Naive thymus-derived CD8-positive, alpha-beta T cell (primary cell): ENCODE measurements at regions of chr1 and their contacts with region 1.

Region 1: GRCh38 chr1:227762233-227762911 is 27.1 kb downstream of the SNAP47 start:
- DNase-seq: peak; percentile 79 to 94 (median 85)
- ATAC-seq: peak; percentile 61 to 63
- H3K4me3 Mint-ChIP-seq: peak overlapping the region in 9 of 10 donors; percentile 56 to 84 (median 71)
- H3K27ac Mint-ChIP-seq: peak overlapping the region; percentile 63 to 95 (median 88)
- H3K4me1 Mint-ChIP-seq: peaks cover 30 to 69% (median 68%) of the 10 kb centered on the region in 4 donors
- H3K27me3 Mint-ChIP-seq: no peaks in the 10 kb centered on the region

Region 2: GRCh38 chr1:227632325-227632724 is 130.0 kb before region 1 on chr1:
- POLR2A ChIA-PET with region 1: no interaction called
- DNase-seq: no peak
- ATAC-seq: no peak
- H3K4me3 Mint-ChIP-seq: peak overlapping the region in 1 of 10 donors; percentile 16
- H3K27ac Mint-ChIP-seq: no peak overlapping the region
- H3K4me1 Mint-ChIP-seq: no peaks in the 10 kb centered on the region
- H3K27me3 Mint-ChIP-seq: no peaks in the 10 kb centered on the region

Region 3: DNA sequence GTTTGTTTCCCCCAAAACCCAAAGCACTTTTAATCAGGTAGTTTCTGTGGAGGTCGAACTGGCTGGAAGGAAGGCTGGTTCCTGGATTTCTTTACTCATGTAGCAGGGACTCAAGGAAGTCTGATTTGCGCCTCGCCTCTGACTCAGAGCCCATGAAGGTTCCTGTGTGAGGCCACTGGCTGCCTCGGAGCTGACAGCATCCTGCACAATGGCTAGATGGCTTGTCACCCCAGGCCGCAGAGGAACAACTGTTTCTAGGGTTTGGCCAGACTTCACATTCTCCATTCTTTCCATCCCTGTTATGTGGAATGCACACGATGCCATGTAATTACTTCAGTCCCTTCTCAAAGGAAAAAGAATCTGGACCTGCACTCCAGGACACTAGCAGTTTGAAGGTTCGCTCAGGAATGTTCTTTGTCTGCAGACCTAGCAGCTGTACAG is 14.0 kb after region 1 on chr1:
- POLR2A ChIA-PET with region 1: interaction called, 20 read pairs
- DNase-seq: no peak
- ATAC-seq: no peak
- H3K4me3 Mint-ChIP-seq: peak overlapping the region in 1 of 10 donors; percentile 22
- H3K27ac Mint-ChIP-seq: peak overlapping the region in 5 of 10 donors; percentile 46 to 66 (median 52)
- H3K4me1 Mint-ChIP-seq: peaks cover 18 to 39% (median 33%) of the 10 kb centered on the region in 4 donors
- H3K27me3 Mint-ChIP-seq: no peaks in the 10 kb centered on the region

Region 4: DNA sequence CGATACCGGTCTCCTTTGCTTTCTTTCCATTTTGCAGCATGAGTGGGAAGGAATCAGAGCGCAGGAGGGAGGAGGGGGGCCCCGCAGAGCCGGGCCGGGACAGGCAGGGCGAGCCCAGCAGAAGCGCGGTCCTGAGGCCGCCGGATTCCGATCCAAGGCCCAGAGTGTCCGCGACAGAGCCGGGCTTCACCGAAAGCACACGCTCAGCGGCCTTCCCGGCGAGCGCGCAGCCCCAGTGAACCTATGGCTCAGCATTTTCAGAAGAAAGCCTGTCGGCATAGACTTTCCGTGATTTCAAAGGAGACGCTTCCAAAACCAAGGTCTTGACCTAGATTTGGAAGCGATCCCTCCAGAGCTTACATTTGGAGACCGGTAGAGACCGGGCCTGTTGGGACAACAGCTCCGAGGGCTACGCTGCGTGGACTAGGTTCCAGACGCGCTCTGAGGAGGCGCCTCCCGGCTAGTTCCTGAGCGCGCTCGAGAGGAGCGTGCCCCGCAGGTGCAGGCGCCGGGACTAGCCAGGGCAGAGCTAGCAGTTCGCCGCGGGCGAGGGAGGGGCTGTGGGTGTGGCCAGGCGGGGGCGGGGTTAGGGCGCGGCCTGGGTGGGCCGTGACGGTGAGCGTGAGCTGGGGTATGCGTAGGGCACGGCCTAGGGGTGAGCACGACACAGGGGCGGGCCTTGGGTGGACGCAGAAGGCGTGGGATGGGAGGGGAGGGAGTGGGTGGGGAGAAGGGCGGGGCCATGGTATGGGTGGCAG is 25.3 kb after region 1 on chr1:
- POLR2A ChIA-PET with region 1: interaction called, 38 read pairs
- DNase-seq: peak; percentile 86 to 98 (median 93)
- ATAC-seq: peak; percentile 84 to 93
- H3K4me3 Mint-ChIP-seq: peak overlapping the region; percentile 81 to 94 (median 86)
- H3K27ac Mint-ChIP-seq: peak overlapping the region in 8 of 10 donors; percentile 60 to 93 (median 82)
- H3K4me1 Mint-ChIP-seq: peaks cover 16 to 31% (median 28%) of the 10 kb centered on the region in 4 donors
- H3K27me3 Mint-ChIP-seq: no peaks in the 10 kb centered on the region

Region 5: DNA sequence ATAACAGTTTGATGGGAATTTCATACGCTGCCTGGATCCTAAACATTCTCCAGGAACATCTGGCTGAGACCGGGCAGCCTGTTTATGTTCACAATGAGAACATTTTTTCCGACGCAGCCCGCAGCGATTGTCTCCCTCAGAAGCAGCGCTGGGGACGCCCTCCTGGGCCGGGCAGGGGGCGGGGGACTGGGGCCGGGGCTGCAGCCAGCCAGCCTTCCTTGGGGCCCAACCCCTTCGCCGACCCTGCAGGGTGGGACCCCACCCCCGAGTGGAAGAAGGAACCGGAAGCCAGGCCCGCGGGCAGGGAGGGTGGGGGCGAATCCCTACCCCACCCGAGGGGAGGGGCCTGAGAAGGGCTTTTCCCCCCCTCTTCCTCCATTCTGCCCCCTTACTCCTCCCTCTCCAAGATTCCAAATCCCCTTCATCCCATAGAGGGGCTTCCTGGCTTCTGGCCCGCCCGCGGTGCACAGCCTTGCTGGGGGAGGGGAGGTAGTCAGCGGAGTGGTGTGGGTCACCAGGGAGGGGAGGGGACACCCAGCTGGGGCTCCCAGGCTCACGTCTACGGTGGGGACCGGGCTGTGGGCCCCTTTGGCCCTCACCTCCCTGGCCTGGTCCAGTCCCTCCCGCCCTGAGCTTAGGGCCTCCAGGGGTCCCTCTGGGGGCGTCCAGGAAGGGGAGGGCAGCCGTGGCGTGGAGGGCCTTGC is 124.8 kb after region 1 on chr1:
- POLR2A ChIA-PET with region 1: interaction called, 12 read pairs
- DNase-seq: peak in 4 of 10 donors; percentile 34 to 77 (median 38)
- ATAC-seq: peak; percentile 44 to 66
- H3K4me3 Mint-ChIP-seq: peak overlapping the region; percentile 44 to 83 (median 65)
- H3K27ac Mint-ChIP-seq: peak overlapping the region in 9 of 10 donors; percentile 41 to 93 (median 88)
- H3K4me1 Mint-ChIP-seq: peaks cover 21 to 61% (median 39%) of the 10 kb centered on the region in 4 donors
- H3K27me3 Mint-ChIP-seq: no peaks in the 10 kb centered on the region

Region 6: GRCh38 chr1:227946624-227947385 is 184.4 kb after region 1 on chr1:
- POLR2A ChIA-PET with region 1: interaction called, 19 read pairs
- DNase-seq: peak; percentile 25 to 77 (median 59)
- ATAC-seq: peak; percentile 80 to 84
- H3K4me3 Mint-ChIP-seq: peak overlapping the region; percentile 61 to 86 (median 74)
- H3K27ac Mint-ChIP-seq: no peak overlapping the region
- H3K4me1 Mint-ChIP-seq: peaks cover 5 to 14% (median 13%) of the 10 kb centered on the region in 4 donors
- H3K27me3 Mint-ChIP-seq: peaks cover 9 to 31% (median 13%) of the 10 kb centered on the region in 5 donors